Heart left ventricle (tissue), 16 donors: ENCODE measurements at regions of chr12 and their contacts with region 1.

Region 1: DNA sequence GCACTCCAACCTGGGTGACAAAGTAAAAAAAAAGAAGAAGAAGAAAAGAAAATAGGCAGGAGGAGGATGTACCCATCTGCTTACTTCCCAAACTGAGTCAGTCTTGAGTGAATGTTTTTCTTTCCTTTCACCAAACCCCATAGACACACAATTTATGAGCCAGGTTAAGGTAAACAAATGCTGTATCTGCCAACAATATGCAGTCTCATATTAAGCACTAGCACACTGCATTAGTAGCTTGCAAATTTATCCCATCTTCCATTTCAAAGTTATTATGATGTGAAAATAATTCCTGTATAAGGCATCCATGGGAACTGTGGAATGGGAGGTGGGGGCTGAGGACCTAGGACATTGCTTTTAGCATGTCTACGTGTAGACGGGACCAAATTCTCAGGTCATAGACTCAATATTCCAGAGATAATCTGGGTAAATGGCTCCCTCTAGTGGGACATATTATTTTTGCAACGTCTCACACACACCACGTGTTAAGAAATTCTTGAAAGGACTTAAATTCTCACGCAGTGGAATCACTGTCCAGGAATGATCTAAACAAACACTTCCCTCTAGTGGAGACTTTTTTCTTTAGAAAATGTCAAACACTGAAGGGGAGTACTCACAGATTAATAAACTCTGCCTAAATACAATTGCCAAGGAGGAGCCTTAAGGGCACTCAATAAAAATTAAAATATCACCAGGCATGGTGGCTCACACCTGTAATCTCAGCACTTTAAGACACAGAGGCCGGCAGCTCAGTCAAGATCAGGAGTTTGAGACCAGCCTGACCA is 17.1 kb upstream of the OR10P1 start:
- DNase-seq: peak in 2 of 5 donors; percentile 38 to 53
- ATAC-seq: peak; percentile 88 to 92 (median 91)
- H3K4me3 ChIP-seq: no peak overlapping the region
- H3K27ac ChIP-seq: no peak overlapping the region
- H3K4me1 ChIP-seq: peaks cover 0 to 6% (median 0%) of the 10 kb centered on the region in 12 donors
- H3K27me3 ChIP-seq: peaks cover 0 to 4% (median 0%) of the 10 kb centered on the region in 9 donors
- CTCF ChIP-seq: peak; percentile 74 to 89 (median 84)
- POLR2A ChIP-seq: no peak

Region 2: GRCh38 chr12:54993161-54993835 is 626.2 kb before region 1 on chr12:
- intact Hi-C with region 1: loop called in 1 of 10 experiments (anchors 10 kb)
- DNase-seq: peak in 3 of 5 donors; percentile 31 to 42 (median 35)
- ATAC-seq: peak in 3 of 4 donors; percentile 60 to 80 (median 79)
- H3K4me3 ChIP-seq: no peak overlapping the region
- H3K27ac ChIP-seq: no peak overlapping the region
- H3K4me1 ChIP-seq: peaks cover 0 to 27% (median 2%) of the 10 kb centered on the region in 12 donors
- H3K27me3 ChIP-seq: peaks cover 0 to 9% (median 0%) of the 10 kb centered on the region in 9 donors
- CTCF ChIP-seq: peak; percentile 80 to 94 (median 89)
- POLR2A ChIP-seq: no peak

Region 3: DNA sequence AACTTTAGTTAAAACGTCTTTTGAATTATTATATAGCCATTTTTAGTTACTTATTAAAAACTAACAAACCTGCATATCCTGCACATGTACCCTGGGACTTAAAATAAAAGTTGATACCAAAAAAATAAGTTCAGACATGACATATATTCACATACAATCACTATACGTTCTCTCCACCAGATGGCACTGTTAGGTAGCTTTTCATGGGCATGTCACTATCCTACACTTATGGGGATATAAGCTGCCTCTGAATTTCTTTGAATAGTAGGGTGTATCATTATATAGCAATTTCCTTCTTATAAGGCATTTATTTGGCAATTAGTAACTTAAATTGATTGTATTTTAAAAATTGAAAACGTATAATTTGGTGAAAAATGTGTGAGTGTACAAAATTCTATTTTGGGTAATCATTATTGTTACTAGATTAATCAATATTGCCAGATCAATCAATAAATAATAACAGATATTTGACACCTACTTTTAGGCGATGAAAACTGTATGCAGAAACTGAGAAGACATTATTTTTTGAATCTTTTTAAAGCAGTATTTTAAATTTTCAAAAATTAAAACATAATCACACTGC is 430.5 kb before region 1 on chr12:
- intact Hi-C with region 1: loop called (anchors 1 to 5 kb)
- DNase-seq: peak in 1 of 5 donors; percentile 20
- ATAC-seq: peak in 3 of 4 donors; percentile 47 to 67 (median 65)
- H3K4me3 ChIP-seq: no peak overlapping the region
- H3K27ac ChIP-seq: no peak overlapping the region
- H3K4me1 ChIP-seq: no peaks in the 10 kb centered on the region
- H3K27me3 ChIP-seq: peaks cover 0 to 13% (median 0%) of the 10 kb centered on the region in 9 donors
- CTCF ChIP-seq: peak; percentile 56 to 81 (median 66)
- POLR2A ChIP-seq: no peak

Region 4: GRCh38 chr12:55446326-55446725 is 173.2 kb before region 1 on chr12:
- intact Hi-C with region 1: loop called in 1 of 10 experiments (anchors 10 kb)
- DNase-seq: no peak
- ATAC-seq: no peak
- H3K4me3 ChIP-seq: no peak overlapping the region
- H3K27ac ChIP-seq: no peak overlapping the region
- H3K4me1 ChIP-seq: no peaks in the 10 kb centered on the region
- H3K27me3 ChIP-seq: peaks cover 0 to 5% (median 0%) of the 10 kb centered on the region in 9 donors
- CTCF ChIP-seq: no peak
- POLR2A ChIP-seq: no peak